Activated T-helper 1 cell treated with anti-CD3 and anti-CD28 coated beads, Interleukin-12 subunit alpha, Interleukin-12 subunit beta, Interleukin-2, Interleukin-4 antibody, amounts not matched to agents 30 ng/mL and 10 ng/mL and 1 ng/mL, durations not matched to agents 14 hours and 24 hours and 36 hours (primary cell): ENCODE measurements at regions of chr20 and their contacts with region 1.

Region 1: GRCh38 chr20:33992923-33993575 is 662 bp upstream of the RALY start:
- DNase-seq: peak; percentile 99
- H3K4me3 Mint-ChIP-seq: peak overlapping the region; percentile 88
- H3K27ac Mint-ChIP-seq: peak overlapping the region; percentile 97
- H3K4me1 Mint-ChIP-seq: peaks cover 58% of the 10 kb centered on the region
- H3K27me3 Mint-ChIP-seq: peaks cover 2% of the 10 kb centered on the region

Region 2: DNA sequence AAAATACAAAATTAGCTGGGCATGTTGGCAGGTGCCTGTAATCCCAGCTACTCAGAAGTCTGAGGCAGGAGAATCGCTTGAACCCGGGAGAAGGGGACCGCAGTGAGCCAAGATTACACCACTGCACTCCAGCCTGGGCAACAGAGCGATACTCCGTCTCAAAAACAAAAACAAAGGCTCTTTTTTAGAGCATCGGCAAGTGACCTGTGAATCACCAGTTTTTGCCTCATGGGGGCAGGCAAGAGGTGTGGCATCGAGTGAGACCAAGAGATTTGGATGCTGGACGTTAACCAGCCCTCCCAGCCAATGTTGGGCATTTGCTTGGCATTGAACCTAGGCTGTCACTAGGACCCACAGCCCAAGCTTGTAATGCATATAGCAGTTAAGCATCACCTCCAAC is 577.1 kb before region 1 on chr20:
- intact Hi-C with region 1: no loop called
- DNase-seq: no peak
- H3K4me3 Mint-ChIP-seq: no peak overlapping the region
- H3K27ac Mint-ChIP-seq: no peak overlapping the region
- H3K4me1 Mint-ChIP-seq: no peaks in the 10 kb centered on the region
- H3K27me3 Mint-ChIP-seq: no peaks in the 10 kb centered on the region

Region 3: GRCh38 chr20:33554914-33555420 is 438.1 kb before region 1 on chr20:
- intact Hi-C with region 1: loop called (anchors 1 kb)
- DNase-seq: peak; percentile 47
- H3K4me3 Mint-ChIP-seq: peak overlapping the region; percentile 20
- H3K27ac Mint-ChIP-seq: peak overlapping the region; percentile 85
- H3K4me1 Mint-ChIP-seq: peaks cover 15% of the 10 kb centered on the region
- H3K27me3 Mint-ChIP-seq: no peaks in the 10 kb centered on the region

Region 4: GRCh38 chr20:33810885-33811777 is 181.9 kb before region 1 on chr20 and contains the start of gene CHMP4B:
- intact Hi-C with region 1: loop called (anchors 1 kb)
- DNase-seq: peak; percentile 99
- H3K4me3 Mint-ChIP-seq: peak within 1 kb of the TSS; percentile 94
- H3K27ac Mint-ChIP-seq: peak within 1 kb of the TSS; percentile 97
- H3K4me1 Mint-ChIP-seq: peaks cover 47% of the 10 kb centered on the region
- H3K27me3 Mint-ChIP-seq: no peaks in the 10 kb centered on the region
- total RNA-seq, gene CHMP4B: 94.5 and 96.4 TPM in 2 replicates

Region 5: DNA sequence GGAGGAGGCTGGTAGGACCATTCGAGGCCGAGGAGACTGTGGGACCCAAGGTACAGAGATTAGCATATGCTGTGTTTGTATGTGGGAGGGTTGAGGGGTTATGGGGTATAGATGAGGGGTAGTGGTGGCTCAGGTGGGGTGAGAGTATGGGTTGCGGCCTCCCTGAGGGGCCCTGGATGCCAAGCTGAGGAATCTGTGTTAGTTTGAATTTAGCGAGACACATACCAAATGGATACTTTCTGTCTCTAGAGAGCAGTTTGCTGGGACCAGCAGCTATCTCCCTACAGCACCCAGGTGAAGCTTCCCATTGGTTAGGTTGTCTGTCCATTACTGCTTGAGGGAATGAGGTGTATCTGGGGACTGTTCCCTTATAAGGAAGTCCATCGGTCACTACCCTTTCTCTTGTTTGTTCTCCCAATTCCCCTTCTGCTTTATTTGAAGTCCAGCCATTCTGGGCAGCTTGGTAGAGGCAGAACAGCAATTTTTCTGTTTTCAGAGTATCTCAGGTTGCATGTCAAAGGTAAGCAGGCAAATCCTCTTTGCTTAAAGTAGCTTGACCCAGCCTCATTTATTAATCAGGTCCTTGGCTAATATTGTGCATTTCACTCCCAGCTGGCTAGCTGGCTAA is 166.7 kb before region 1 on chr20:
- intact Hi-C with region 1: no loop called
- DNase-seq: no peak
- H3K4me3 Mint-ChIP-seq: no peak overlapping the region
- H3K27ac Mint-ChIP-seq: no peak overlapping the region
- H3K4me1 Mint-ChIP-seq: peaks cover 50% of the 10 kb centered on the region
- H3K27me3 Mint-ChIP-seq: no peaks in the 10 kb centered on the region

Region 6: GRCh38 chr20:34111702-34112599 is 118.9 kb after region 1 on chr20 and contains the start of gene EIF2S2:
- intact Hi-C with region 1: loop called (anchors 1 kb)
- DNase-seq: peak; percentile 96
- H3K4me3 Mint-ChIP-seq: peak within 1 kb of the TSS; percentile 88
- H3K27ac Mint-ChIP-seq: peak within 1 kb of the TSS; percentile 98
- H3K4me1 Mint-ChIP-seq: peaks cover 46% of the 10 kb centered on the region
- H3K27me3 Mint-ChIP-seq: peaks cover 1% of the 10 kb centered on the region
- total RNA-seq, gene EIF2S2: 99.8 and 105 TPM in 2 replicates

Region 7: DNA sequence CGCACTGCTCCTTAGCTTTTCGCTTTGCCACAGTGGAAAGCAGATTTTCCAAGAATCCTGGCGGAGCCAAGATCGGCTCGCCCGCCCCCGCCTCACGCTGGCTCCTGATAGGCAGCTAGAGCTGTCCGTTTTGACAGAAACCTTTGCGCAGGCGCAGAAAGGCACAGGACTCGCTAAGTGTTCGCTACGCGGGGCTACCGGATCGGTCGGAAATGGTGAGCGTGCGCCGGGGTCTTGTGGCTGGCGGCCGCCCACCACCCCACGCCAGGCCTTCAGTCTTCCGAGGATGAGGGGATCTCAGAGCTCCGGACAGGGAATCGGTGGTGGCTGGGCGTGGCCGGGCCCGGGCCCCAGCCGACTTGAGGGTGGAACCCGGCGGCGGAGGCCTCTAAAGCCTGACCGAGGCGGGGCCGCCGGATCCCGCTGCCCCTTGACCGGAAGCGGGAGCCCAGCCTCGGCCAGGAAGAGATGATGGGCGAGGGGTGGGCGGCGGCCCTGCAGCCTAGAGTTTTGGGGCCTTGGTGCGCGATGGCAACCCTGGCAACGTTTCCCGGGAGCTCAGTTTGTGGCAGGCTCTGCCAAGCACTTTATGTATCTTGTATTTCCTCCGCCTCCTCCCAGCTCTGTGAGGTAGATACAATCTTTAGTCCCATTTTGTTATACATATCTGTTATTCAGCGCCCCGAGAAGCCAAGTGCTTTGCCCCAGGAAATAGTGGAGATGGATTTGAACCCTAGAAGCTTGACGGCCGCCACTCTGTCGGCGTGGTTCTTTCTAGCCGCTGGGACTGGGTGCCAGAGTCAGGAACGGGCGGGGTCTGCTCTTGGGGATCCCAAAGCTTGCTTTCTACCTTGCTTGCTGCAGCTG is 523.4 kb after region 1 on chr20 and contains the start of gene DYNLRB1:
- intact Hi-C with region 1: loop called (anchors 5 kb)
- DNase-seq: peak; percentile 93
- H3K4me3 Mint-ChIP-seq: peak within 1 kb of the TSS; percentile 95
- H3K27ac Mint-ChIP-seq: peak within 1 kb of the TSS; percentile 96
- H3K4me1 Mint-ChIP-seq: peaks cover 35% of the 10 kb centered on the region
- H3K27me3 Mint-ChIP-seq: no peaks in the 10 kb centered on the region
- total RNA-seq, gene DYNLRB1: 92.0 and 104 TPM in 2 replicates

Region 8: GRCh38 chr20:35410613-35411012 is 1417.6 kb after region 1 on chr20:
- intact Hi-C with region 1: loop called (anchors 2 kb)
- DNase-seq: no peak
- H3K4me3 Mint-ChIP-seq: peak overlapping the region; percentile 87
- H3K27ac Mint-ChIP-seq: peak overlapping the region; percentile 19
- H3K4me1 Mint-ChIP-seq: peaks cover 6% of the 10 kb centered on the region
- H3K27me3 Mint-ChIP-seq: no peaks in the 10 kb centered on the region